CD8-positive, alpha-beta memory T cell (primary cell): ENCODE measurements at regions of chr14 and their contacts with region 1.

Region 1: GRCh38 chr14:90573385-90574105 is 176.7 kb downstream of the CALM1 start:
- DNase-seq: peak in 1 of 5 donors; percentile 23
- H3K4me3 ChIP-seq: no peak overlapping the region
- H3K4me3 Mint-ChIP-seq: no peak overlapping the region
- H3K27ac ChIP-seq: no peak overlapping the region
- H3K27ac Mint-ChIP-seq: no peak overlapping the region
- H3K4me1 ChIP-seq: no peaks in the 10 kb centered on the region
- H3K4me1 Mint-ChIP-seq: no peaks in the 10 kb centered on the region
- H3K27me3 ChIP-seq: no peaks in the 10 kb centered on the region
- H3K27me3 Mint-ChIP-seq: no peaks in the 10 kb centered on the region

Region 2: DNA sequence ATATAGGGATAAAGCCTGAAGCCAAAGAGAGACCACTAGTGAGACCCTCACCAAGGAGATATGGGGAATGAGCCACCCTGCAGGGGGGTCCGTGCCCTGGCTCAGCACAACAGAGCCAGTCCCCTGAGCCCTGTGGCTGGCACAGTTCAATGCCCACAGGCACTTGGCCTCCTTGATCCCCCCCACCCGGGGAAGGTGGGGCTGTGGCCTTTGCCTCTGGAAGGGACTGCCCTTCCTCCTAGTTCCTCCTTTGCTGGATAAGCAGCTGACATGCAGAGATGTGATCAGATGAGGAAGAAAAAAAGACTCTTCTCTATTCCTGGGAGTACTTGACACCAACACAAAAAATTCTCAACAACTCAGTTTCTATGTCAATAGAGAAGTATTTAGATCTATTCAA is 222.8 kb after region 1 on chr14:
- CTCF ChIA-PET with region 1: no interaction called
- POLR2A ChIA-PET with region 1: interaction called, 10 read pairs
- DNase-seq: no peak
- H3K4me3 ChIP-seq: no peak overlapping the region
- H3K4me3 Mint-ChIP-seq: no peak overlapping the region
- H3K27ac ChIP-seq: no peak overlapping the region
- H3K27ac Mint-ChIP-seq: no peak overlapping the region
- H3K4me1 ChIP-seq: no peaks in the 10 kb centered on the region
- H3K4me1 Mint-ChIP-seq: peaks cover 4 to 7% (median 6%) of the 10 kb centered on the region in 3 donors
- H3K27me3 ChIP-seq: no peaks in the 10 kb centered on the region
- H3K27me3 Mint-ChIP-seq: peaks cover 0 to 3% of the 10 kb centered on the region in 2 donors

Region 3: DNA sequence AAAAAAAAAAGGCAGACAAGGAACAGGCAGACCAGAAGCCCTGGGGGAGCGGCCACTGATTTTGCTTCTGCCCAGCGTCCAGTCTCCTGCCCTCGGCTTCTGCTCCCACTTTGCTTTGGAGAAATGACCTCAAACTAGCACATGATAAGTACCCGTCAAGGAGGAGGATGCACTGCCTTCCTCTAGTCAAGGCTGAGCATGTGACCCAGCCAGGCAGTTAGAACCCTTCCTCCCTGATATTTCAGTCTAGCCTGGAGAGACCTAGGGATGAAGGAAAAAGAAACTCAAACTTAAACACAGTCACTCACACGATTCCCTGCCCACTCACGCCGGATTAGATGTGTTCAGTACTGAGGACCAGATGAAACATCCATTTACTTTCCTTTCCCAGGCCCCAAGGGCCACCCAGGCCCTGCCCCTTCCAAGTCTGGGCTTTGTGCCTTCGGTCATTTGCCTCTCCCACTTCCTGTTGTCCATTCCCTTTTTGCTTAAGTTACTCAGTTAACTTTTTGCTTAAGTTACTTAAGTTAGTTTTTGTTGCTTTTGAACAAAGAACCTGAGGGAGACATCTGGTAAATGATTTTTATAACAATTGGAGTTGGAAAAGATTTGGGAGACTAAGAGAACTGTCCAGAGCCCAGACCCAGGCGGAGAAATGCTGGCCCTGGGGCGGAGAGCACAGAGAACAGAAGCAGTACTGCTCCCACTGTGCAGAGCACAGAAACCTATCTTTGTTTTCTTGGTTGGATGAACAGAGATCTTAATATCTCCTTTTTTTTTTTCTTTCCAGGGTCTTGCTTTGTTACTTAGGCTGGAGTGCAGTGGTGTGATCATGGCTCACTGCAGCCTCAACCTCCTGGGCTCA is 265.7 kb after region 1 on chr14:
- CTCF ChIA-PET with region 1: no interaction called
- POLR2A ChIA-PET with region 1: no interaction called
- DNase-seq: no peak
- H3K4me3 ChIP-seq: no peak overlapping the region
- H3K4me3 Mint-ChIP-seq: no peak overlapping the region
- H3K27ac ChIP-seq: no peak overlapping the region
- H3K27ac Mint-ChIP-seq: peak overlapping the region in 1 of 8 donors; percentile 7
- H3K4me1 ChIP-seq: peaks cover 7% of the 10 kb centered on the region
- H3K4me1 Mint-ChIP-seq: peaks cover 8 to 23% (median 15%) of the 10 kb centered on the region in 3 donors
- H3K27me3 ChIP-seq: no peaks in the 10 kb centered on the region
- H3K27me3 Mint-ChIP-seq: peaks cover 2 to 3% of the 10 kb centered on the region in 2 donors